ENCODE measurements at regions of chr7 and their contacts with region 1.

Region 1: DNA sequence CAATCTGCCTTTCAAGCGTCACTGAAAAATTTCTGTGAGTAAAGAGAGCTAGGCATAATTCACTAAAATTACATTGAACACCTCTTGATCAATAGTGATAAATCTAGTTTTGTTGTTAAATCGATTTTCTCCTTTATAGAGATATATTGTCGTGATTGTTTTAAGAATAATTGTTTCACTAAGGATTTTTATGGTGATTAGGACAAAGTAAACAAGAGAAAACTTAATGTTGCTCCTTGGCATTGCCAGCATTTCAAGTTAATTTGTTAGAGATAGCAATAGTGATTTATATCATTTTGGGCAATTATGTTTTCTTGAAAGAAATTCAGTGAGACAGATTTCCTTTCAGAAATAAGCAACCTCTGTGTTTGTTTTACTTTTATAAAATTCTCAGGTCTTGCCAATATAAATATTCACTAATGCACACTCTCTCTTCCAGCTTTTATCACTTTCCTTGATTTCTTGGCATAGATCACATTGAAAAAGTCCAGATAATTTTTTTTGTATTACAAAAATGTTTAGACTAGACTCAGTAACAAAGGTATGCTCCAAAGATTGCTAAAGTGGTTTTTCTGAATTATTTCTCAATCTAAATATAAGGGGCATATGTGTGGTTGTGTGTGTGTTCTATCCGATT is 538.7 kb downstream of the TFEC start:
- DNase-seq: no peak
- H3K4me3 ChIP-seq: no peak overlapping the region
- H3K27ac ChIP-seq: no peak overlapping the region
- H3K4me1 ChIP-seq: no peaks in the 10 kb centered on the region
- H3K27me3 ChIP-seq: no peaks in the 10 kb centered on the region
- CTCF ChIP-seq: no peak
- POLR2A ChIP-seq: no peak

Region 2: GRCh38 chr7:114889646-114890285 is 602.1 kb before region 1 on chr7:
- intact Hi-C with region 1: no loop called
- DNase-seq: no peak
- H3K4me3 ChIP-seq: no peak overlapping the region
- H3K27ac ChIP-seq: no peak overlapping the region
- H3K4me1 ChIP-seq: no peaks in the 10 kb centered on the region
- H3K27me3 ChIP-seq: no peaks in the 10 kb centered on the region
- CTCF ChIP-seq: no peak
- POLR2A ChIP-seq: no peak

Region 3: GRCh38 chr7:115387137-115387536 is 104.7 kb before region 1 on chr7:
- intact Hi-C with region 1: no loop called
- DNase-seq: no peak
- H3K4me3 ChIP-seq: no peak overlapping the region
- H3K27ac ChIP-seq: no peak overlapping the region
- H3K4me1 ChIP-seq: no peaks in the 10 kb centered on the region
- H3K27me3 ChIP-seq: no peaks in the 10 kb centered on the region
- CTCF ChIP-seq: no peak
- POLR2A ChIP-seq: no peak

Region 4: GRCh38 chr7:115471891-115472290 is 20.0 kb before region 1 on chr7:
- intact Hi-C with region 1: loop called (anchors 2 kb)
- DNase-seq: no peak
- H3K4me3 ChIP-seq: no peak overlapping the region
- H3K27ac ChIP-seq: no peak overlapping the region
- H3K4me1 ChIP-seq: no peaks in the 10 kb centered on the region
- H3K27me3 ChIP-seq: no peaks in the 10 kb centered on the region
- CTCF ChIP-seq: no peak
- POLR2A ChIP-seq: no peak

Region 5: DNA sequence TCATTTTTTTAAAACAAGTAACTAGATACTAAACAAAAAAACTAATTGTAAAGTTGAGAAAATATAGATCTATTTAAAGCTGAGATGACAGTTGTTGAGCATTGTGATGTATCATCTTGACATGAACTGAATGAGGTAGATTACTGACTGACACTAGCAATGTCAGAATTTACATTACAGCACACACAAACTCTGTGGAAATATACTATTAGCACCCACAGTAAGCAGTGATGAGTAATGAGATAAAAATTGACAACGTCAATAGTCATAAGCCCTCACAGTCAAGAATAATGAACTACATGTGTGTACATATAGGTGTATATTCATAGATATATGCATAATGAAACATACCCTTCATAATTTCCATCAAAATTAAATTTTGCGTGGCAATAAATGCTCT is 170.3 kb after region 1 on chr7:
- intact Hi-C with region 1: no loop called
- DNase-seq: no peak
- H3K4me3 ChIP-seq: no peak overlapping the region
- H3K27ac ChIP-seq: no peak overlapping the region
- H3K4me1 ChIP-seq: no peaks in the 10 kb centered on the region
- H3K27me3 ChIP-seq: no peaks in the 10 kb centered on the region
- CTCF ChIP-seq: no peak
- POLR2A ChIP-seq: no peak